HEK293T (cell line): ENCODE measurements at regions of chr3 and their contacts with region 1.

Region 1: GRCh38 chr3:113287803-113288648 is 76.7 kb downstream of the BOC start:
- DNase-seq: peak; percentile 58

Region 2: GRCh38 chr3:113051302-113051711 is 236.7 kb before region 1 on chr3:
- CTCF ChIA-PET with region 1: interaction called, 12 read pairs
- POLR2A ChIA-PET with region 1: no interaction called
- DNase-seq: peak; percentile 76

Region 3: DNA sequence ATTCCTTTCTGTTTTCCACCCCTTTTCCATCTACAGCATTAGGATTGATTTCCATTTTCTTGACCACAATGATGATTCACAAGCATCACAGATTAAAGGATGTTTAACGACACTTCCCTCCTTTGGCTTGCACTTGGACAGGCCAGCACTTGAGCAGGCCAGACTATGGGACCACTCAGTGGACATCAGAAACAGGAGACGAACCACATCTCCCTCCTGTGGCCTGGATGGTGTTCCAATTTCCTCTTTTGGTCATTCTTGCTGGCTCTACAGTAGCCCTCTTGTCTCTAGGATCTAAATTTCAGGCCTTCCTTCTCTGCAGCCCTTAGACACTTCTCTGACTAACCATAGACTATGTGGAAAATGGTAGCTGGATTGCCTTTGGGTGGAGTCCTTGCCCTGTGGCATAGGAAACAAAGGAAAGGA is 155.4 kb before region 1 on chr3:
- CTCF ChIA-PET with region 1: interaction called, 15 read pairs
- POLR2A ChIA-PET with region 1: no interaction called
- DNase-seq: no peak

Region 4: DNA sequence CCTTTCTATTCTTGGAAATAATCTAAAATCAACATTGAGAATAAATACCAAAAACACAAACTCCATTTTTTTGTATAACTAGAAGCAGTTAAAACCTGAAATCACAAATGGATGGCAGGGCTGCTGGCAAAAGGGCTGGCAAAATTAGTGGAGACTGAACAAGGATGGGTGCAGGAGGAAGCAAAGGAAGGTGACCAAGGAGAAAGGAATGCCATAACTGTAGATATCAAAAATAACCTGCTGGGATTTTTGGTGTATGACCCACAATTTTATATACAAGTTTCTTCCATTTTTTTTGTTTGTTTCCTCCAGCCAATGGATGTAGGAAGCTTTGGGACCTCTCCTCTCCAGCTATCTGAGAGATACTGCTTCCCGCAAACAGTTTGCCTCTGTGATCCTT is 140.6 kb after region 1 on chr3:
- CTCF ChIA-PET with region 1: no interaction called
- POLR2A ChIA-PET with region 1: no interaction called
- DNase-seq: no peak